T-cell (primary cell): ENCODE measurements at regions of chr10 and their contacts with region 1.

Region 1: DNA sequence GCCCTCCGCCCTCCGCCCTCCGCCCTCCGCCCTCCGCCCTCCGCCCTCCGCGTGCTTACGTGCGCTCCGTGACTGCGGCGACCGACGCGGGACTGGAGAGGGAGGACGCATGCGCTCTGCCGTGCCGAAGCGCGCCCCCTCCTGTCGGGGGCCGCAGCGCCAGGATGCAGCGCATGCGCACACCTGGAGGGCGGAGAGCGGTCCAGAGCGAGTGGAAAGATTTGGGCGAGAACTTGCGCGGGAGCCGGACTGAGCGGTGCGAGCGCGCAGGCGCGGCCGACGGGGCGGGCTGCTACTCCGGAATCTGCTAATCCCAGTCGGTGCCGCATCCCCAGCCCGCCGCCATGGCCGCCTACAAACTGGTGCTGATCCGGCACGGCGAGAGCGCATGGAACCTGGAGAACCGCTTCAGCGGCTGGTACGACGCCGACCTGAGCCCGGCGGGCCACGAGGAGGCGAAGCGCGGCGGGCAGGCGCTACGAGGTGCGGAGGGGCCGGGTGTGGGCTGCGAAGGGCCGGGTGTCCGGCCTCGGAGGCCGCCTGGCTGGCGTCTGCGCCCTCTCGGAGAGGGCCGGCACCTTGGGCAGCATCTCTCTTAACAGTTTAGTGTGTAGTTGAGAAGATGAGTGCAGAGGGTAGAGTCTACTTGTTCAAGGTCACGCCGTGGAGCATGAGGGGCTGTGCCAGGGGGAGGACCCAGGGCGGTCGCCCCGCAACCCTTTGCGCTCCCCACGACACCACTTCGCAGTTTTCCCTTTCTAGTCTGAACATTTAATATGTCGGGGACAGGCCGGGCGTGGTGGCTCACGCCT is at the start of gene PGAM1:
- DNase-seq: peak; percentile 85 to 99 (median 91)
- ATAC-seq: peak; percentile 83 to 93 (median 87)
- H3K4me3 ChIP-seq: peak within 1 kb of the TSS; percentile 76 to 83
- H3K4me3 Mint-ChIP-seq: peak within 1 kb of the TSS; percentile 84 to 94 (median 87)
- H3K27ac ChIP-seq: peak within 1 kb of the TSS; percentile 88
- H3K27ac Mint-ChIP-seq: peak within 1 kb of the TSS; percentile 91 to 93
- H3K4me1 ChIP-seq: peaks cover 23 to 45% of the 10 kb centered on the region in 2 experiments
- H3K4me1 Mint-ChIP-seq: peaks cover 38 to 55% (median 45%) of the 10 kb centered on the region in 3 donors
- H3K27me3 ChIP-seq: no peaks in the 10 kb centered on the region
- H3K27me3 Mint-ChIP-seq: peaks cover 0 to 2% of the 10 kb centered on the region in 2 donors
- total RNA-seq, gene PGAM1: 66.3 to 108 (median 94.8) TPM

Region 2: GRCh38 chr10:96850825-96851224 is 575.3 kb before region 1 on chr10:
- CTCF ChIA-PET with region 1: no interaction called
- POLR2A ChIA-PET with region 1: interaction called in 1 of 2 experiments, 10 read pairs
- DNase-seq: no peak
- ATAC-seq: no peak
- H3K4me3 ChIP-seq: no peak overlapping the region
- H3K4me3 Mint-ChIP-seq: no peak overlapping the region
- H3K27ac ChIP-seq: no peak overlapping the region
- H3K27ac Mint-ChIP-seq: no peak overlapping the region
- H3K4me1 ChIP-seq: peaks cover 0 to 9% of the 10 kb centered on the region in 2 experiments
- H3K4me1 Mint-ChIP-seq: peaks cover 65 to 73% (median 66%) of the 10 kb centered on the region in 3 donors
- H3K27me3 ChIP-seq: no peaks in the 10 kb centered on the region
- H3K27me3 Mint-ChIP-seq: no peaks in the 10 kb centered on the region

Region 3: GRCh38 chr10:97234400-97234799 is 191.8 kb before region 1 on chr10:
- CTCF ChIA-PET with region 1: interaction called in 1 of 2 experiments, 15 read pairs
- POLR2A ChIA-PET with region 1: no interaction called
- DNase-seq: peak in 1 of 35 experiments; percentile 32
- ATAC-seq: no peak
- H3K4me3 ChIP-seq: no peak overlapping the region
- H3K4me3 Mint-ChIP-seq: no peak overlapping the region
- H3K27ac ChIP-seq: no peak overlapping the region
- H3K27ac Mint-ChIP-seq: no peak overlapping the region
- H3K4me1 ChIP-seq: no peaks in the 10 kb centered on the region
- H3K4me1 Mint-ChIP-seq: peaks cover 0 to 6% (median 1%) of the 10 kb centered on the region in 3 donors
- H3K27me3 ChIP-seq: no peaks in the 10 kb centered on the region
- H3K27me3 Mint-ChIP-seq: no peaks in the 10 kb centered on the region

Region 4: GRCh38 chr10:97314671-97315070 is 111.5 kb before region 1 on chr10:
- CTCF ChIA-PET with region 1: no interaction called
- POLR2A ChIA-PET with region 1: no interaction called
- DNase-seq: no peak
- ATAC-seq: no peak
- H3K4me3 ChIP-seq: no peak overlapping the region
- H3K4me3 Mint-ChIP-seq: no peak overlapping the region
- H3K27ac ChIP-seq: no peak overlapping the region
- H3K27ac Mint-ChIP-seq: no peak overlapping the region
- H3K4me1 ChIP-seq: peaks cover 0 to 11% of the 10 kb centered on the region in 2 experiments
- H3K4me1 Mint-ChIP-seq: peaks cover 7 to 13% (median 10%) of the 10 kb centered on the region in 3 donors
- H3K27me3 ChIP-seq: peaks cover 0 to 3% of the 10 kb centered on the region in 2 experiments
- H3K27me3 Mint-ChIP-seq: no peaks in the 10 kb centered on the region

Region 5: DNA sequence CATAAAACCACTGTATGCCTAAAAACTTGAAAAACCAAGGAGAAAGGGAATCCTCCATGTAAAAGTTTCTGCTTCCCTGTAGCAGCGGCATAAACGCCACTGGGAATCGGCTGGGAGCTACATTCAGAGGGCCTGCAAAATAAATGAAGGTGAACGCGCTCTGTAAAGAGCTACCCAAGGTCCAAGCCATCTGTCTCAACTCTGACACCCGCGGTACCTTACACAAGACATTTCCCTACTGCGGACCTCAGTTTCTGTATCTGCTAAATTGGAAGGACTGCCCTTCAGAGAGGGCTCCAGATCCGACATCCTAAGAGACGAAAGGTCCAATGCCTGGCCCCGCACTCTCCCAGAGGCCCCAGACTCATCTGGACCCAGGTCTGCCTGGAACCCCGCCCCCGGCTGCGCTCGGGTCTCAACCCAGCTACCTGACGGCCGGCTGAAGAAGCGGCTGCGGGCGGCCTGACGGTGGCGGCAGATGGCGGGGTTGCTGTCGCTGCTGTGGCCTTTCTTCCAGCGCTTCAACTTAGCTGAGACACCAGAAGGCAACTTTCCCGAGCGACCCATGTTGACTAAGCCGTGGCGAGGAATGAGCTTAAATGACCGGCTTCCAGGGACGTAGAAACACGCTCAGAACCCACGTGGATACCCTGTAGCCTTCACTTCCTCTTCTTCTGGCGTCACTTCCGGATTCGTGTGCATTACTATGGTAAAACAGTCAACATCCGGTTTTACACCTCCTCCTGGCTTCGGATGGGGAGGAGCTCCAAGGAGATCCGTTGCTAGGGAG is 25.3 kb before region 1 on chr10 and contains the start of gene RRP12:
- CTCF ChIA-PET with region 1: interaction called, 3 read pairs
- POLR2A ChIA-PET with region 1: interaction called in 1 of 2 experiments, 13 read pairs
- DNase-seq: peak; percentile 47 to 97 (median 85)
- ATAC-seq: peak; percentile 96 to 99 (median 99)
- H3K4me3 ChIP-seq: peak within 1 kb of the TSS; percentile 69 to 95
- H3K4me3 Mint-ChIP-seq: peak within 1 kb of the TSS; percentile 93 to 98 (median 95)
- H3K27ac ChIP-seq: peak within 1 kb of the TSS; percentile 85
- H3K27ac Mint-ChIP-seq: peak within 1 kb of the TSS; percentile 93
- H3K4me1 ChIP-seq: peaks cover 5 to 16% of the 10 kb centered on the region in 2 experiments
- H3K4me1 Mint-ChIP-seq: peaks cover 15 to 20% (median 16%) of the 10 kb centered on the region in 3 donors
- H3K27me3 ChIP-seq: no peaks in the 10 kb centered on the region
- H3K27me3 Mint-ChIP-seq: no peaks in the 10 kb centered on the region
- total RNA-seq, gene RRP12: 25.9 to 91.4 (median 33.5) TPM

Region 6: GRCh38 chr10:97445722-97446639 is 19.8 kb after region 1 on chr10 and contains the starts of genes EXOSC1 and ZDHHC16:
- CTCF ChIA-PET with region 1: interaction called in 1 of 2 experiments, 4 read pairs
- POLR2A ChIA-PET with region 1: interaction called in 1 of 2 experiments, 11 read pairs
- DNase-seq: peak; percentile 72 to 93 (median 86)
- ATAC-seq: peak; percentile 97 to 98 (median 98)
- H3K4me3 ChIP-seq: peak within 1 kb of the TSS; percentile 72 to 88
- H3K4me3 Mint-ChIP-seq: peak within 1 kb of the TSS; percentile 98 to 99 (median 98)
- H3K27ac ChIP-seq: peak within 1 kb of the TSS; percentile 52
- H3K27ac Mint-ChIP-seq: peak within 1 kb of the TSS; percentile 91 to 94
- H3K4me1 ChIP-seq: peaks cover 8 to 19% of the 10 kb centered on the region in 2 experiments
- H3K4me1 Mint-ChIP-seq: peaks cover 39 to 56% (median 55%) of the 10 kb centered on the region in 3 donors
- H3K27me3 ChIP-seq: no peaks in the 10 kb centered on the region
- H3K27me3 Mint-ChIP-seq: no peaks in the 10 kb centered on the region
- total RNA-seq, gene EXOSC1: 32.2 to 51.0 (median 46.8) TPM
- total RNA-seq, gene ZDHHC16: 16.1 to 38.8 (median 36.2) TPM

Region 7: DNA sequence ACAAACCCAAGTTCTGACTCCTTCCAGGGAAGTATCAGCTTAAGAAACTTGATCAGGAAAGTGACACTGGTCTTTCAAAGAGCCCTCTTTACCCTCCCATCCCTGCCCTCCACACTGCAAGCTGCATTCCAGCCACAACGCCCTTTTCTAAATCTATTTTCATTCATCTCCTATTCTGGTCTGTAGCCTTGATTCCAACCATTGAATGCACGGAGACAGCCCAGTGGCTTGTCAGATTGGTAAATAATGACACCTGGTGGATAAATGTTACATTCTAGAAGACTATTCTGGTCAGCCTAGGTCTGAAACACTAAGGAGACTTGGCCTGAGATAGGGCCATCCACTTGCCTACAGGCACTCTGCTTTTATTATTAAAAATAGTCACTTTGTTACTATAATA is 186.2 kb after region 1 on chr10:
- CTCF ChIA-PET with region 1: no interaction called
- POLR2A ChIA-PET with region 1: no interaction called
- DNase-seq: peak in 1 of 35 experiments; percentile 13
- ATAC-seq: no peak
- H3K4me3 ChIP-seq: no peak overlapping the region
- H3K4me3 Mint-ChIP-seq: no peak overlapping the region
- H3K27ac ChIP-seq: no peak overlapping the region
- H3K27ac Mint-ChIP-seq: no peak overlapping the region
- H3K4me1 ChIP-seq: no peaks in the 10 kb centered on the region
- H3K4me1 Mint-ChIP-seq: no peaks in the 10 kb centered on the region
- H3K27me3 ChIP-seq: peaks cover 0 to 6% of the 10 kb centered on the region in 2 experiments
- H3K27me3 Mint-ChIP-seq: no peaks in the 10 kb centered on the region